ENCODE measurements at regions of chr18 and their contacts with region 1.

Region 1: GRCh38 chr18:49784427-49785185 is 28.7 kb downstream of the ACAA2 start:
- DNase-seq: peak in 1 of 9 experiments; percentile 22
- ATAC-seq: no peak
- H3K4me3 ChIP-seq: no peak overlapping the region
- H3K4me3 Mint-ChIP-seq: no peak overlapping the region
- H3K27ac ChIP-seq: peak overlapping the region in 1 of 2 experiments; percentile 24
- H3K27ac Mint-ChIP-seq: no peak overlapping the region
- H3K4me1 ChIP-seq: peaks cover 26% of the 10 kb centered on the region
- H3K4me1 Mint-ChIP-seq: peaks cover 48% of the 10 kb centered on the region
- H3K27me3 ChIP-seq: no peaks in the 10 kb centered on the region
- H3K27me3 Mint-ChIP-seq: no peaks in the 10 kb centered on the region
- CTCF ChIP-seq: no peak

Region 2: GRCh38 chr18:48842259-48843061 is 942.1 kb before region 1 on chr18:
- CTCF ChIA-PET with region 1: no interaction called
- POLR2A ChIA-PET with region 1: no interaction called
- intact Hi-C with region 1: no loop called
- DNase-seq: peak; percentile 34 to 90 (median 65)
- ATAC-seq: peak; percentile 78
- H3K4me3 ChIP-seq: peak overlapping the region in 1 of 2 experiments; percentile 47
- H3K4me3 Mint-ChIP-seq: peak overlapping the region; percentile 54
- H3K27ac ChIP-seq: peak overlapping the region; percentile 72 to 90
- H3K27ac Mint-ChIP-seq: peak overlapping the region; percentile 80
- H3K4me1 ChIP-seq: peaks cover 67% of the 10 kb centered on the region
- H3K4me1 Mint-ChIP-seq: peaks cover 74% of the 10 kb centered on the region
- H3K27me3 ChIP-seq: no peaks in the 10 kb centered on the region
- H3K27me3 Mint-ChIP-seq: no peaks in the 10 kb centered on the region
- CTCF ChIP-seq: no peak

Region 3: GRCh38 chr18:49819823-49820671 is 35.4 kb after region 1 on chr18:
- CTCF ChIA-PET with region 1: no interaction called
- POLR2A ChIA-PET with region 1: no interaction called
- intact Hi-C with region 1: loop called in 1 of 2 experiments (anchors 5 kb)
- DNase-seq: peak; percentile 8 to 86 (median 50)
- ATAC-seq: peak; percentile 87
- H3K4me3 ChIP-seq: peak overlapping the region; percentile 3 to 8
- H3K4me3 Mint-ChIP-seq: peak overlapping the region; percentile 68
- H3K27ac ChIP-seq: peak overlapping the region; percentile 22 to 71
- H3K27ac Mint-ChIP-seq: peak overlapping the region; percentile 87
- H3K4me1 ChIP-seq: peaks cover 47% of the 10 kb centered on the region
- H3K4me1 Mint-ChIP-seq: peaks cover 62% of the 10 kb centered on the region
- H3K27me3 ChIP-seq: no peaks in the 10 kb centered on the region
- H3K27me3 Mint-ChIP-seq: no peaks in the 10 kb centered on the region
- CTCF ChIP-seq: no peak

Region 4: DNA sequence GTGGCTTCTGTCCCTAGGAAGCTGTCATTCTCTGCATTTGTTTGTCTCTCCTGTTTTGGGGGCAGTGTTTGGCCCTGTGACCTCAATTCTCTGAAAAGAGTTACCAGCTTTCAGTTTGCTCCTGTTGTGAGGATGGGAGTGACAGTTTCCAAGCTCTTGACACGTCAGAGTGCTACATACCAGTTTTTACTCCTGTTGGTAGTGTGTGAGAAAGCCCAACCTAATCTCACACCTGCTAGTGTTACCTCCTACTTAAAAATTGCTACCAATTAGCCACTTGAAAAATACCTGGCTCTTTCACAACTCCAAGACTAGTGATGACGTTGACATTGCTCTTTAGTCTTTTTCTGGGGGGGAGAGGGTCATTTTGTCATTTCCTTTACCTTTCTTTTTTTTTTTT is 604.4 kb after region 1 on chr18:
- CTCF ChIA-PET with region 1: no interaction called
- POLR2A ChIA-PET with region 1: no interaction called
- intact Hi-C with region 1: no loop called
- DNase-seq: no peak
- ATAC-seq: no peak
- H3K4me3 ChIP-seq: no peak overlapping the region
- H3K4me3 Mint-ChIP-seq: no peak overlapping the region
- H3K27ac ChIP-seq: no peak overlapping the region
- H3K27ac Mint-ChIP-seq: no peak overlapping the region
- H3K4me1 ChIP-seq: no peaks in the 10 kb centered on the region
- H3K4me1 Mint-ChIP-seq: no peaks in the 10 kb centered on the region
- H3K27me3 ChIP-seq: no peaks in the 10 kb centered on the region
- H3K27me3 Mint-ChIP-seq: no peaks in the 10 kb centered on the region
- CTCF ChIP-seq: no peak

Measured in CD8-positive, alpha-beta T cell (primary cell).